HEK293 (cell line): ENCODE measurements at regions of chr2 and their contacts with region 1.

Region 1: DNA sequence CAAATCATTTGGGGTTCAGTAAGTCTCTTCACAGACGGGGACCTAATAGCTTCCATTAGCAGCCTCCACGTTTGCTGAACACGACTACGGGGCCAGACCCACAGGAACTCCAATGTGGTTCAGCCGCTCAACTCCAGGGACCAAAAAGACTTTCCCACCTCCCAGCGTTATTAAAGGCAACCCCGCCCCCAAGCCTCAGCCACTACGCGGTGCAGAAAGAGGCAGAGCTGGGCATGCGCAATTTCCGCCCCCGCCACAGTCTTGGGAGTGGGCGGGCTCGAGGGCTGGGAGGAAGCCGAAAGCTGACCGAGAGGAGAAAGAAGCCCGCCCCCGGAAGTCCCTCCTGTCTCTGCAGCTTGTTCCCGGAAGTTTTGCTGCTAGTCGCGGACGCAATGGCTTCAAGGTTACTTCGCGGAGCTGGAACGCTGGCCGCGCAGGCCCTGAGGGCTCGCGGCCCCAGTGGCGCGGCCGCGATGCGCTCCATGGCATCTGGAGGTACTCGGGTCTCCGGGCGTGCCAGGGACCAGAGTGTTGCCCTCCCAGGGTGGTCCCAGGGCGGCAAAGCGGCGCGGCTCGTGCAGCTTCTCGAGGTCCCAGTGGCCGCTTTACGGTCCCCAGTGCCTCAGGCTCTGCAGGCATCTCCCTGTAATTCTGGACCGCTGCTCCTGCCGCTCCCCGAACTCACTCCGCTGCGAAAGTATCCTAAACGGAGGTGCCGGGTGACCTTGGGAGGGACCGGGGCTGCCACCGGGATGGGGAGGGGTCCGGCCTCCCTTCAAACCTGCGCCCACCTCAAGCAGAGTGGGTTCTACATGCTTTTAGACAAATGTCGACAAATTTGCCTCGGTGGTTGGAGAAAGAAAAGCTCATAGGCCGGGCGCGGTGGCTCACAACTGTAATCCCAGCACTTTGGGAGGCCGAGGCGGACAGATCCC is at the start of gene COX5B:
- H3K4me3 ChIP-seq: peak within 1 kb of the TSS; percentile 94
- H3K27ac ChIP-seq: peak within 1 kb of the TSS; percentile 67; the same call in 1 of the 2 replicates
- H3K4me1 ChIP-seq: no peaks in the 10 kb centered on the region
- CTCF ChIP-seq: no peak

Region 2: DNA sequence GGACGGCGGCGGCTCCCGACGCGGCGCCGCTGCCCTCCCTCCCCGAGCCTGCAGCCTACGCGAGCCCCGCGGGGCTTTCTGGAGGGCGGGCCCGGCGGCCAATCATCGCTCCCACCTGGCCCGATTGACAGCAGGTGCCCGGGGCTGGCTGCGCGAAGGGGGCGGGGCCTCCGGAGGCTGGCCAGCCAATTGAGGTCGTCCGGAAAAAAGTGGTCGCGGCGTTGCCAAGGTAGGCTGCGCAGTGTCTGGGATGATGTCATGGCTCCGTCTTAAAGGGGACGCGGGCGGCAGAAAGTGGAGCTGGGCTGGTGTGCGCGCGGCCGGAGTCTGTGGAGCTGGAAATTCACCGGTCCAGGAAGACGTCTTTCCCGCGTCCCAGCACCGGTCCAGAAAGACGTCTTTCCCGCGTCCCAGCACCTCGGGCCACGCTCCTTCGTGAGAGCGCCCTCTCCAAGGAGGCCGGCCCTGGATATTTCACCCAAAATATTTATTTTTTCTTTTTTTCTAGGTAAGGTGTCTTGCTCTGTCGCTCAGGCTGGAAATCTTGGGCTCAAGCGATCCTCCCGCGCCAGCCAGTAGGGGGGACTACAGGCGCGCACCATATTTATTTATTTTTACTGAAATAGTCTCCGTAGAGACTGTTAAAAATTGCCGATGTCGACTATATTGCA is 18.1 kb after region 1 on chr2 and contains the start of gene ACTR1B:
- CTCF ChIA-PET with region 1: interaction called, 5 read pairs
- POLR2A ChIA-PET with region 1: interaction called, 183 read pairs
- H3K4me3 ChIP-seq: peak within 1 kb of the TSS; percentile 69
- H3K27ac ChIP-seq: peak within 1 kb of the TSS; percentile 95
- H3K4me1 ChIP-seq: 0 out of 2 replicates have a peak, but pooled peaks cover 2% of the 10 kb centered on the region
- CTCF ChIP-seq: no peak; the same call in none of the 2 replicates

Region 3: GRCh38 chr2:97675430-97676113 is 29.6 kb after region 1 on chr2:
- CTCF ChIA-PET with region 1: no interaction called
- POLR2A ChIA-PET with region 1: no interaction called
- H3K4me3 ChIP-seq: no peak overlapping the region
- H3K27ac ChIP-seq: no peak overlapping the region
- H3K4me1 ChIP-seq: no peaks in the 10 kb centered on the region
- CTCF ChIP-seq: no peak

Region 4: DNA sequence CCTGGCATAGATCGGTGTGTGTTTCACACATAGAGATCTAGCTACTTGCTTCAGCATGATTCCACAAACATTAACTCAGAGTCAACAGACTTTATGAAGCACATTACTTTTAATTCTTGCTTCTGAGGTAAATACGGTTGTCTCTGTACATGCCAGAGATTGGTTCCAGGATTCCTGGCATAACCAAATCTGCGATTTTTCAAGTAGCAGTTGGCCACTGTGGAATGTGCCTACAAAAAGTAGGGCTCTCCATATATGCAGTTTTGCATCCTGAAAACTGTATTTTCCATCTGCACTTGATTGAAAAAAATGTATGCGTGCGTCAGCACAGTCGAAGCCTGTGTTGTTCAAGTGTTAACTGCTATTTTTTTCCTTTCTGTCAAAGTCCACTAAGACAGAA is 152.5 kb after region 1 on chr2:
- CTCF ChIA-PET with region 1: no interaction called
- POLR2A ChIA-PET with region 1: no interaction called
- H3K4me3 ChIP-seq: no peak overlapping the region
- H3K27ac ChIP-seq: no peak overlapping the region
- H3K4me1 ChIP-seq: no peaks in the 10 kb centered on the region
- CTCF ChIP-seq: no peak